ENCODE measurements at regions of chr10 and their contacts with region 1.

Region 1: GRCh38 chr10:12568391-12569009 is 219.2 kb downstream of the CAMK1D start:
- DNase-seq: peak in 1 of 2 donors; percentile 7
- H3K4me3 ChIP-seq: no peak overlapping the region
- CTCF ChIP-seq: no peak
- POLR2A ChIP-seq: no peak

Region 2: DNA sequence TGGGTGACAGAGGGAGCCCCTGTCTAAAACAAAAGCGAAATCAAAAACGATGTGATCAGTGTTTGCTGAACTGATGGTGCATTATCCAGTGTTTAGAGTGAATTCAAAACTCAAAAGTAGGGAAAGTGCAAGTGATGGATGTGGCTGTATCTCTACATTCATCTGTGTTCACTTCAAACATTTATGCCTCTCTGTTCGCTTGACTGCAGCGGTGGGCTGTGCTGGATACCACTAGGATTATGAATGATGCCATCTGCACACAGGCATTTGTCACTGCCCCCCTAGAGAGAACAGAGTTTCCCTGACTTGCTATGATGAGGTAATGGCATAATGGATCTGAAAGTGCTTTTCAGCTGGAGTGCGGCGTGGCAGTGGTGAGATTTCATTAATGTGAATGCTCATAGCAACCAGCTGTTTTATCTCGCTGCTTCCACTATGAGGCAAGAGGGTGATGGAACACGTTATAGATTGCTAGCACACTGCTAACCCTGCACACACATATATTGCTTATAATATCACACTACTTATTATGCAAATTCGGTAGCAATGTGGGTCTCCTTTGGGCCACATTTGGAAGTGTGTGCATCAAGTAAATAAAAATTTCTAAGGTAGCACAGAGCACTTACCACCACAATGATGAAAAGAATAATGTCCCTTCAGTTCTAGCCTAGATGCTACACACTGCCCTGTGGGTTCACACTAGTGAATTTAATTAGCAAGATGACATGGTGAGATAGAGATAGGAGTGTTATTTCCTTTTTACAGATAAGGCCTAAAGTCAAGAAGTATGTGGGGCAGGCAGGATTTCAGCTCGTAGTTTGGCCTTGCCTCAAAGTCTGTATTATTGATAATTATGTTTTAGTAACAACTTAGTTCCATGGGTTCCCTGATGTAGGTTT is 54.5 kb before region 1 on chr10:
- intact Hi-C with region 1: no loop called
- DNase-seq: no peak
- H3K4me3 ChIP-seq: no peak overlapping the region
- CTCF ChIP-seq: no peak
- POLR2A ChIP-seq: no peak

Region 3: DNA sequence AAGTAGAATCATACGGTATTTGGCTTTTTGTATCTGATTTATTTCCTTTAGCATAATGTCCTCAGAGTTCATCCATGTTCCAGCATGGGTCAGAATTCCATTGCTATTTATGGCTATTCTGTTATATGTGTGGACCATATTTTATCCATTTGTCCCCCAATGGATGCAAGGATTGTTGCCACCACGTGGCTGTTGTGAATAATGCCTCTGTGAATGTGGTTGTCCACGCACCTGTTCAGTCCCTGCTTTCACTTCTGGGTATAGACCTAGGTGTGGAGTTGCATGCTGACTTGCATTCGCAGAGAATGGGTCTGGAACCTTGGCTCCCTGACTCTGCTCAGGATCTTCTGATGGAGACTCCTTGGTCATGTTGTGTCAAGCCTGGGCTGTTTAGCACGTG is 19.2 kb before region 1 on chr10:
- intact Hi-C with region 1: loop called (anchors 1 kb)
- DNase-seq: no peak
- H3K4me3 ChIP-seq: no peak overlapping the region
- CTCF ChIP-seq: no peak
- POLR2A ChIP-seq: no peak